ENCODE measurements at regions of chr6 and their contacts with region 1.

Region 1: GRCh38 chr6:142566628-142567396 is 265.0 kb downstream of the ADGRG6 start:
- DNase-seq: peak in 8 of 9 donors; percentile 17 to 69 (median 54)
- ATAC-seq: peak; percentile 81
- H3K4me3 ChIP-seq: no peak overlapping the region
- H3K4me3 Mint-ChIP-seq: peak overlapping the region in 7 of 10 donors; percentile 8 to 78 (median 51)
- H3K27ac ChIP-seq: no peak overlapping the region
- H3K27ac Mint-ChIP-seq: peak overlapping the region in 8 of 9 donors; percentile 51 to 92 (median 76)
- H3K4me1 ChIP-seq: peaks cover 0 to 60% of the 10 kb centered on the region in 2 donors
- H3K4me1 Mint-ChIP-seq: peaks cover 19 to 85% (median 74%) of the 10 kb centered on the region in 7 donors
- H3K27me3 ChIP-seq: no peaks in the 10 kb centered on the region
- H3K27me3 Mint-ChIP-seq: no peaks in the 10 kb centered on the region

Region 2: GRCh38 chr6:142146828-142147662 is 419.8 kb before region 1 on chr6 and contains the starts of genes NMBR and VTA1:
- CTCF ChIA-PET with region 1: interaction called, 3 read pairs
- POLR2A ChIA-PET with region 1: no interaction called
- intact Hi-C with region 1: loop called (anchors 2 to 5 kb)
- DNase-seq: peak; percentile 81 to 98 (median 97)
- ATAC-seq: peak; percentile 99
- H3K4me3 ChIP-seq: peak within 1 kb of the TSS; percentile 95
- H3K4me3 Mint-ChIP-seq: peak within 1 kb of the TSS; percentile 88 to 98 (median 95)
- H3K27ac ChIP-seq: peak within 1 kb of the TSS; percentile 75
- H3K27ac Mint-ChIP-seq: peak within 1 kb of the TSS; percentile 80 to 98 (median 94)
- H3K4me1 ChIP-seq: peaks cover 22 to 25% of the 10 kb centered on the region in 2 donors
- H3K4me1 Mint-ChIP-seq: peaks cover 36 to 73% (median 65%) of the 10 kb centered on the region in 7 donors
- H3K27me3 ChIP-seq: no peaks in the 10 kb centered on the region
- H3K27me3 Mint-ChIP-seq: peaks cover 0 to 2% (median 0%) of the 10 kb centered on the region in 5 donors
- total RNA-seq, gene NMBR: not detected
- total RNA-seq, gene VTA1: 13.6 to 41.3 (median 32.6) TPM

Region 3: GRCh38 chr6:142518115-142518514 is 48.7 kb before region 1 on chr6:
- CTCF ChIA-PET with region 1: no interaction called
- POLR2A ChIA-PET with region 1: no interaction called
- intact Hi-C with region 1: no loop called
- DNase-seq: no peak
- ATAC-seq: no peak
- H3K4me3 ChIP-seq: no peak overlapping the region
- H3K4me3 Mint-ChIP-seq: no peak overlapping the region
- H3K27ac ChIP-seq: no peak overlapping the region
- H3K27ac Mint-ChIP-seq: peak overlapping the region in 1 of 9 donors; percentile 22
- H3K4me1 ChIP-seq: no peaks in the 10 kb centered on the region
- H3K4me1 Mint-ChIP-seq: peaks cover 0 to 28% (median 13%) of the 10 kb centered on the region in 7 donors
- H3K27me3 ChIP-seq: no peaks in the 10 kb centered on the region
- H3K27me3 Mint-ChIP-seq: no peaks in the 10 kb centered on the region

Region 4: GRCh38 chr6:142551274-142551811 is 15.5 kb before region 1 on chr6:
- CTCF ChIA-PET with region 1: interaction called, 4 read pairs
- POLR2A ChIA-PET with region 1: interaction called, 4 read pairs
- intact Hi-C with region 1: loop called in 1 of 2 experiments (anchors 2 kb)
- DNase-seq: peak in 8 of 9 donors; percentile 34 to 67 (median 58)
- ATAC-seq: peak; percentile 94
- H3K4me3 ChIP-seq: no peak overlapping the region
- H3K4me3 Mint-ChIP-seq: peak overlapping the region; percentile 21 to 81 (median 58)
- H3K27ac ChIP-seq: no peak overlapping the region
- H3K27ac Mint-ChIP-seq: peak overlapping the region in 5 of 9 donors; percentile 5 to 85 (median 60)
- H3K4me1 ChIP-seq: peaks cover 0 to 23% of the 10 kb centered on the region in 2 donors
- H3K4me1 Mint-ChIP-seq: peaks cover 14 to 47% (median 35%) of the 10 kb centered on the region in 7 donors
- H3K27me3 ChIP-seq: no peaks in the 10 kb centered on the region
- H3K27me3 Mint-ChIP-seq: no peaks in the 10 kb centered on the region

Region 5: GRCh38 chr6:142845624-142846458 is 279.0 kb after region 1 on chr6:
- CTCF ChIA-PET with region 1: no interaction called
- POLR2A ChIA-PET with region 1: no interaction called
- intact Hi-C with region 1: loop called in 1 of 2 experiments (anchors 10 kb)
- DNase-seq: peak; percentile 27 to 70 (median 63)
- ATAC-seq: peak; percentile 72
- H3K4me3 ChIP-seq: peak overlapping the region; percentile 44
- H3K4me3 Mint-ChIP-seq: peak overlapping the region; percentile 84 to 93 (median 86)
- H3K27ac ChIP-seq: peak overlapping the region; percentile 84
- H3K27ac Mint-ChIP-seq: peak overlapping the region; percentile 91 to 100 (median 95)
- H3K4me1 ChIP-seq: peaks cover 69 to 74% of the 10 kb centered on the region in 2 donors
- H3K4me1 Mint-ChIP-seq: peaks cover 49 to 99% (median 86%) of the 10 kb centered on the region in 7 donors
- H3K27me3 ChIP-seq: no peaks in the 10 kb centered on the region
- H3K27me3 Mint-ChIP-seq: no peaks in the 10 kb centered on the region

Region 6: DNA sequence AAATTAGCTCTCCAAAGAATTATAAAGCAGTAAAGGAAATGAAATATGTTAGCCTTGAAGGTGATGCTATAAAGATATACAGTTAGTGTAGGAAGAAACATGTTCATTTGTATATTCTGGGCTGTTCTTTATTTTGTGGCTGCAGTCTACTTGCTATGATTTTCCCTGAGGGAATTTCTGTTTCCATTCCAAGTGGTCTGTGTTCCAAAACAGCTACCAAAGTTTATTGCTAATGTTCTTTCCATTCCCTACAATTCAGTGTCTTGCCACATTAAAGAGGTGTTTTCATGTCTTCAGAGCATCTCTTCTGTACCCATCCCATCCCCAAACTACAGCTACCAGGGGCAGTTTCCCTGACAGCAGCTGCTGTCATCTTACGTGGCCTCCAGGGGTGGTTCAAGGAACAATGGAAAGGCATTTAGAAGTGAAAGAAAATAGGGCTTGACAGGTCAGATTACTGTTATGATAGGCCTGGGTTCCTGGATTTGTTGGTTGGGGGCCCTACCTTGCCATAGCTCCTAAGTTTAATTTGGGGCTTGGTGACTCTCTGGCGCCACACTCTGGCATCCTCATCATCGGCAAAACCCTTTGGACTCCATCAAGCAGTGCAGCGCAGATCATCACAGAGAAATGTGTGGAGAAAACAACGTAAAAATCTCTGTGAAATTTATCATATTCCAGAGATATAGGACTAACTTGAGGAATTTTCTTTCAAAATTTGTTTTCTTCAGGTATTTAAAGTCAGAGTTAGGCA is 460.1 kb after region 1 on chr6:
- CTCF ChIA-PET with region 1: interaction called, 5 read pairs
- POLR2A ChIA-PET with region 1: no interaction called
- intact Hi-C with region 1: loop called (anchors 1 to 2 kb)
- DNase-seq: peak in 7 of 9 donors; percentile 3 to 47 (median 34)
- ATAC-seq: peak; percentile 76
- H3K4me3 ChIP-seq: no peak overlapping the region
- H3K4me3 Mint-ChIP-seq: no peak overlapping the region
- H3K27ac ChIP-seq: no peak overlapping the region
- H3K27ac Mint-ChIP-seq: peak overlapping the region in 3 of 9 donors; percentile 28 to 76 (median 53)
- H3K4me1 ChIP-seq: no peaks in the 10 kb centered on the region
- H3K4me1 Mint-ChIP-seq: peaks cover 0 to 5% (median 0%) of the 10 kb centered on the region in 7 donors
- H3K27me3 ChIP-seq: no peaks in the 10 kb centered on the region
- H3K27me3 Mint-ChIP-seq: no peaks in the 10 kb centered on the region

Region 7: DNA sequence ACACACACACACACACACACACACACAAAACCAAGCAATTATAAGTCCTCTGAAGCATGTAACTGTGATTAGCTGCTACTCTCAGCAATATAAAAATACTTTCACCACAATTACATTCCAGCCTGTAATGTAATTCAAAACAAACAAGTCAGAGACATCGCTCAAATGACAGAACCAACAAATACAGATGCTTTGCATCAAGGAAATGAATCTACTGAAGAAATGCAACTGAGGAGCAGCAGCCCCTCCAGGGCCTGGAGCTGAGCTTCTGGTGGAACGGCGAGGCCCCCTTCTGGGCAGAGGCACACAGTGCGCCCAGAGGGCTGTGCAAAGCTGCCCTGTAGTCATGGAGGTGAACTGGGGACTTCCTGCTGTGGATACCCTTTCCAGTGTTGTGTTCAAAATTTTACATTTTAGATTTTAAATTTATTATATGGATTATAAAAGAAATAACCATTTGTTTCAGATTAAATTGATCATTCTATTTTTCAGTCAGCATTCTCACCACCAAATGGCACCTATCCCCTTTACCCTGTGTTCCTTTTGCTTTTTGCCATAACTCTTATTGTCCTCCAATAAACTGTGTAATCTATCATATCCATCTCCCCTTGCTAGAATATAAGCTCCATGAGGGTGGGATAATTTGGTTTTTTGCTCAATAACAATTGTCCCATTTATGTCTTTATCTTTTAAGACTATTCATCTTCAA is 860.5 kb after region 1 on chr6:
- CTCF ChIA-PET with region 1: no interaction called
- POLR2A ChIA-PET with region 1: no interaction called
- intact Hi-C with region 1: loop called (anchors 1 kb)
- DNase-seq: peak; percentile 53 to 80 (median 73)
- ATAC-seq: peak; percentile 99
- H3K4me3 ChIP-seq: no peak overlapping the region
- H3K4me3 Mint-ChIP-seq: no peak overlapping the region
- H3K27ac ChIP-seq: no peak overlapping the region
- H3K27ac Mint-ChIP-seq: peak overlapping the region in 3 of 9 donors; percentile 25 to 75 (median 28)
- H3K4me1 ChIP-seq: no peaks in the 10 kb centered on the region
- H3K4me1 Mint-ChIP-seq: peaks cover 0 to 5% (median 0%) of the 10 kb centered on the region in 7 donors
- H3K27me3 ChIP-seq: no peaks in the 10 kb centered on the region
- H3K27me3 Mint-ChIP-seq: no peaks in the 10 kb centered on the region

Measured in naive thymus-derived CD4-positive, alpha-beta T cell (primary cell).